ENCODE measurements at regions of chr12 and their contacts with region 1.

Region 1: GRCh38 chr12:4141348-4142270 is 132.0 kb upstream of the CCND2 start:
- DNase-seq: no peak
- ATAC-seq: peak; percentile 54
- H3K4me3 ChIP-seq: no peak overlapping the region
- H3K27ac ChIP-seq: peak overlapping the region; percentile 45; the same call in 1 of the 2 replicates
- H3K4me1 ChIP-seq: peaks cover 69% of the 10 kb centered on the region
- H3K27me3 ChIP-seq: no peaks in the 10 kb centered on the region
- CTCF ChIP-seq: no peak
- EP300 ChIP-seq: peak in 1 of 2 experiments; percentile 40; a peak in 1 of 4 replicates
- POLR2A ChIP-seq: no peak
- RAD21 ChIP-seq: no peak

Region 2: DNA sequence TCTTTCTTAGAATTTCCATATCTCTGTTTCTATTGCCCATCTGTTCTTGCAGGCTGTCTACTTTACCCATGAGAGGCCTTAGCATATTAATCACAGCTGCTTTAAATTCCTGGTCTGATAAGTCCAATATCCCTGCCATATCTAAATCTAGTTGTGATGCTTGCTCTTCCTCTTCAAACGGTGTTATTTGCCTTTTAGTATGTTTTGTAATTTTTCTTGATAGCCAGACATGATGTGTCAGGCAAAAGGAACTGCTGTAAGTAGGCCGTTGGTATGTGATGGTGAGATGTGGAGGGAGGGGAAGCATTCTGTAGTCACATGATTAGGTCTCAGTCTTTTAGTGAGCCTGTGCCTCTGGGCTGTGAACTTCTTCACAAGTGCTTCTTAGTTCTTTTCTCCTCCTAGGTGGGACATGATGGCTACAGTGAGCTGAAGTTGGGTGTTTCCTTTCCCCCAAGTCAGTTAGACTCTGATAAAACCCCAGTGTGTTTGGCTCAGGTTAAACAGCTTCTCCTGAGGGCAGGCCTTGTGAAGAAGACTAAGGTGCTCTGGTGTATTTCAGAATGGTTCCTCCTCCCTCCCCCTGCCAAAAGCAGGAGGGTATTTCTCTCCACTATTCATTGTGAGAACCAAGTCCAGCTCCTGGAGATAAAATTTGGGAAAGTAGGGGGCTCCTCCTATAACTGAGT is 72.5 kb before region 1 on chr12:
- CTCF ChIA-PET with region 1: no interaction called
- POLR2A ChIA-PET with region 1: no interaction called
- RAD21 ChIA-PET with region 1: no interaction called
- SMC1A ChIA-PET with region 1: no interaction called
- in situ Hi-C with region 1: no loop called
- intact Hi-C with region 1: no loop called
- DNase-seq: no peak
- ATAC-seq: peak; percentile 29
- H3K4me3 ChIP-seq: no peak overlapping the region
- H3K27ac ChIP-seq: no peak overlapping the region
- H3K4me1 ChIP-seq: no peaks in the 10 kb centered on the region
- H3K27me3 ChIP-seq: no peaks in the 10 kb centered on the region
- CTCF ChIP-seq: no peak
- EP300 ChIP-seq: no peak
- POLR2A ChIP-seq: no peak
- RAD21 ChIP-seq: no peak

Region 3: GRCh38 chr12:4174417-4174816 is 32.8 kb after region 1 on chr12:
- CTCF ChIA-PET with region 1: no interaction called
- POLR2A ChIA-PET with region 1: interaction called, 3 read pairs
- RAD21 ChIA-PET with region 1: interaction called, 4 read pairs
- SMC1A ChIA-PET with region 1: interaction called, 10 read pairs
- in situ Hi-C with region 1: no loop called
- intact Hi-C with region 1: no loop called
- DNase-seq: no peak
- ATAC-seq: no peak
- H3K4me3 ChIP-seq: no peak overlapping the region
- H3K27ac ChIP-seq: no peak overlapping the region
- H3K4me1 ChIP-seq: peaks cover 19% of the 10 kb centered on the region; the same call in 1 of the 2 replicates
- H3K27me3 ChIP-seq: no peaks in the 10 kb centered on the region
- CTCF ChIP-seq: no peak
- EP300 ChIP-seq: no peak
- POLR2A ChIP-seq: no peak
- RAD21 ChIP-seq: no peak

Region 4: GRCh38 chr12:4246116-4246515 is 104.5 kb after region 1 on chr12:
- CTCF ChIA-PET with region 1: no interaction called
- POLR2A ChIA-PET with region 1: interaction called, 5 read pairs
- RAD21 ChIA-PET with region 1: interaction called, 12 read pairs
- SMC1A ChIA-PET with region 1: interaction called, 5 read pairs
- in situ Hi-C with region 1: no loop called
- intact Hi-C with region 1: no loop called
- DNase-seq: no peak
- ATAC-seq: peak; percentile 89
- H3K4me3 ChIP-seq: no peak overlapping the region
- H3K27ac ChIP-seq: peak overlapping the region; percentile 45
- H3K4me1 ChIP-seq: peaks cover 17% of the 10 kb centered on the region
- H3K27me3 ChIP-seq: no peaks in the 10 kb centered on the region; a peak in 1 of 4 replicates
- CTCF ChIP-seq: no peak
- EP300 ChIP-seq: no peak
- POLR2A ChIP-seq: no peak
- RAD21 ChIP-seq: 0 out of 2 replicates have a peak, but pooled peaks have one; percentile 0

Region 5: GRCh38 chr12:4261655-4262054 is 120.0 kb after region 1 on chr12:
- CTCF ChIA-PET with region 1: interaction called, 181 read pairs
- POLR2A ChIA-PET with region 1: interaction called, 19 read pairs
- RAD21 ChIA-PET with region 1: interaction called, 171 read pairs
- SMC1A ChIA-PET with region 1: interaction called, 344 read pairs
- in situ Hi-C with region 1: no loop called
- intact Hi-C with region 1: no loop called
- DNase-seq: peak; percentile 64
- ATAC-seq: peak; percentile 96
- H3K4me3 ChIP-seq: no peak overlapping the region
- H3K27ac ChIP-seq: peak overlapping the region; percentile 80
- H3K4me1 ChIP-seq: peaks cover 15% of the 10 kb centered on the region
- H3K27me3 ChIP-seq: no peaks in the 10 kb centered on the region
- CTCF ChIP-seq: no peak
- EP300 ChIP-seq: no peak
- POLR2A ChIP-seq: no peak
- RAD21 ChIP-seq: no peak